A673 (cell line): ENCODE measurements at regions of chr1 and their contacts with region 1.

Region 1: DNA sequence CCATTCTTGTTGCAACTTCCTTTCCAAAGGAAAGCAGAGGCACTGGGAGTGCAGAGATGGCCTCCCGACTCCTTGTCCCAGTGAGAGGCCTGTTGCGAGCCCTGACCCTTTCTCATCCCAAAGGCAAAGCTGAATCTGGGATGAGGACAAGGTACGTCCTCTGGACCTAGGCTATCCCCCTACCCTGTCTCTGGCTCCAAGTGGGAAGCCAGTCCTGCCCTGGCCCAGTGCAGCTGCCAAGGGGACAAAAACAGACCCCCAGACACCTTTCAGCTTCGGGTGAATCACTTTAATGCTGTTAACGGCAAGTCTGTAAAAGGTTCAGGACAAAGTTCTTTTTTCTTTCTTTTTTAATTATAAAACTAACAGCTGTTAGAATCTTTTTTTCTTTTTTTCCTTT is 2.5 kb downstream of the TSSK3 start:
- DNase-seq: no peak
- H3K4me3 ChIP-seq: no peak overlapping the region
- H3K27ac ChIP-seq: no peak overlapping the region
- H3K4me1 ChIP-seq: peaks cover 9% of the 10 kb centered on the region
- H3K27me3 ChIP-seq: no peaks in the 10 kb centered on the region
- CTCF ChIP-seq: no peak

Region 2: GRCh38 chr1:32351399-32352238 is 13.2 kb before region 1 on chr1:
- CTCF ChIA-PET with region 1: no interaction called
- POLR2A ChIA-PET with region 1: interaction called, 14 read pairs
- intact Hi-C with region 1: no loop called
- DNase-seq: peak; percentile 97
- H3K4me3 ChIP-seq: peak overlapping the region; percentile 63
- H3K27ac ChIP-seq: peak overlapping the region; percentile 90
- H3K4me1 ChIP-seq: peaks cover 8% of the 10 kb centered on the region
- H3K27me3 ChIP-seq: no peaks in the 10 kb centered on the region
- CTCF ChIP-seq: no peak